ENCODE measurements at regions of chr12 and their contacts with region 1.

Region 1: GRCh38 chr12:86903159-86903558 is 647.0 kb upstream of the MGAT4C start:
- DNase-seq: no peak
- CTCF ChIP-seq: no peak

Region 2: GRCh38 chr12:86914716-86915115 is 11.6 kb after region 1 on chr12:
- CTCF ChIA-PET with region 1: interaction called, 14 read pairs
- POLR2A ChIA-PET with region 1: no interaction called
- DNase-seq: no peak
- CTCF ChIP-seq: peak; percentile 17

Measured in GM10248 (cell line).